ENCODE measurements at regions of chr4 and their contacts with region 1.

Region 1: DNA sequence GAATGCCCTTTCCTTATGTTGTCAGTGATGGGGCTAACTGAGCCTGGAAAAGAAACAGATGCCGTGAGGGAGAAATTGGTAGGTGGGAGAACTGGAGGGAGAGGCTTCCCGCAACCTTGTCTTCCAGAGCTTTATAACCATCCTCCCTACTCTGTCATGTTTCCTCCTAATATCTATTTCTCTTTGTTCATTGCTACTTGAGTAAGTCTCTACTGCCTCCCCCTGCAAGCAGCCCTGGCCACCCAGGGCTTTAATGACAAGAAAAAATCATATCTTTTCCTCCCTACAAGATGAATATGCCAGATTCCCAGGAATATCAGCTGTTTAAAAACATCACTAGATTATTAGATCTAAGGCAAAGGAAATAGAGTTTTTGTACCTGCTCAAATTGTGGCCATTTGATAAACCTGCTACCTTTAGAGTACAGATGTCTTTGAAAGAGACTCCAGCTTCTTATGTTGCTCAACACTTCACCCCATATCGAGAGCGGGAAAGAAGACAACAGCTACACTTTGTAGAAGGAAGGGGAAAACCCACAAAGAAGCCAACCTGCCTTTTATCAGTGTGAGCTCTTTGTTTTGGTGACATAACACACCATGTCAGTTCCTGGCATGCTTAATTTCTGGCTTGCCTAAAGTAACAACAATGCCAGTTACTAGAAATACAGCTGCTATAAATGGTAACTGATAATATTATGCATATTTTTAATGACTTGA is 186.6 kb upstream of the LEF1 start:
- DNase-seq: peak in 8 of 14 experiments; percentile 36 to 86 (median 55)
- ATAC-seq: peak; percentile 86
- H3K4me3 ChIP-seq: no peak overlapping the region
- H3K4me3 Mint-ChIP-seq: peak overlapping the region; percentile 47
- H3K27ac ChIP-seq: peak overlapping the region; percentile 69
- H3K27ac Mint-ChIP-seq: peak overlapping the region; percentile 87
- H3K4me1 ChIP-seq: peaks cover 40% of the 10 kb centered on the region
- H3K4me1 Mint-ChIP-seq: peaks cover 78% of the 10 kb centered on the region
- H3K27me3 ChIP-seq: no peaks in the 10 kb centered on the region
- H3K27me3 Mint-ChIP-seq: no peaks in the 10 kb centered on the region
- CTCF ChIP-seq: no peak

Region 2: DNA sequence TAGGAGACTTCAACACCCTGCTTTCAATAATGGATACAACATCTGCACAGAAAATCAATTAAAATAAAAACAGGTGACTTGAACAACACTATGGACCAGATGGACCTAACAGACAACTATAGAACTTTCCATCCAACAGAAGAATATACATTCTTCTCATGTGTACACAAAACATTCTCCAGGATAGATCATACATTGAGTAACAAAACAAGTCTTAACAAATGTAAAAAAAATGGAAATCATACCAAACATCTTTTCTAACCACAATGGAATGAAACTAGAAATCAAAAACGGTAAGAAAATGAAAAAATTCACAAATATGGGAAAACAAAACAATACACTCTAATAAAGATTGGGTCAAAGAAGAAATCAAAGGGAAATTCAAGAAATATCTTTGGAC is 399.3 kb before region 1 on chr4:
- CTCF ChIA-PET with region 1: no interaction called
- POLR2A ChIA-PET with region 1: no interaction called
- intact Hi-C with region 1: no loop called
- DNase-seq: no peak
- ATAC-seq: no peak
- H3K4me3 ChIP-seq: no peak overlapping the region
- H3K4me3 Mint-ChIP-seq: no peak overlapping the region
- H3K27ac ChIP-seq: no peak overlapping the region
- H3K27ac Mint-ChIP-seq: no peak overlapping the region
- H3K4me1 ChIP-seq: no peaks in the 10 kb centered on the region
- H3K4me1 Mint-ChIP-seq: no peaks in the 10 kb centered on the region
- H3K27me3 ChIP-seq: no peaks in the 10 kb centered on the region
- H3K27me3 Mint-ChIP-seq: no peaks in the 10 kb centered on the region
- CTCF ChIP-seq: no peak

Region 3: DNA sequence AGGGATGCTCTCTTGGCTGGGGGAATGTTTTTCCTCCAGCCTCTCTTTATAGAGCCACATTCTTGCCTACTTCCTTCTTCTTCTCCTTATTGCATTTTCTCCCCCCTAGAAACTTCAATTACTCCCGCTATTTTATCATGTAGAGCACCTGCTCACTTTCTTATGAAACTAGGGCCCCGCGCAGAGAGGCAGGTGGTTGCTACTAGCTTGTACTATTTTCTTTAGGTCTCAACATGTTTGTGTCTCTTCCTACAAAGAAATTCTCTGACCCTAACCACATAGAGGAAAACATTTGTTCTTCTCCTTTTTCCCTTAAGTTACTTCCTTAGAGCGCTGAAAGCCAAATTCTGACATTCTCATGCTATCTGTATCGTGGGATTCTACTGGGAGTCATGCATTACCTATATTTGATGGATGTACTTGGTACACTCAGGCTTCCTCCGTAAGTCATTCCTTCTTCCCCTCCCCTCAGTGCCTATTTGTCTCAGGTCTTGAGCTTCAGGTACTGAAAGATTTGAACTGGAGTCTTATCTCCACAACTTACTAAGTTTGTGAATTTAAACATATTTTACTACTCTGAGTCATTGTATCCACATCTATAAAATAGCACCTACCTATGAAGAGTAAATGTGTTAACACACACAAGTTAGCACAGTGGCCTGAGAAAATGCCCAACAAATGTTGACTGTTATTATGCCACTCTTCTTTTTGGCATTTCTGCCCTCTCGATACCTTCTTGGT is 27.5 kb before region 1 on chr4:
- CTCF ChIA-PET with region 1: no interaction called
- POLR2A ChIA-PET with region 1: interaction called, 4 read pairs
- intact Hi-C with region 1: loop called in 1 of 2 experiments (anchors 1 kb)
- DNase-seq: no peak
- ATAC-seq: no peak
- H3K4me3 ChIP-seq: no peak overlapping the region
- H3K4me3 Mint-ChIP-seq: no peak overlapping the region
- H3K27ac ChIP-seq: no peak overlapping the region
- H3K27ac Mint-ChIP-seq: no peak overlapping the region
- H3K4me1 ChIP-seq: peaks cover 4% of the 10 kb centered on the region
- H3K4me1 Mint-ChIP-seq: peaks cover 36% of the 10 kb centered on the region
- H3K27me3 ChIP-seq: no peaks in the 10 kb centered on the region
- H3K27me3 Mint-ChIP-seq: no peaks in the 10 kb centered on the region
- CTCF ChIP-seq: no peak

Region 4: GRCh38 chr4:108370291-108371141 is 15.2 kb after region 1 on chr4:
- CTCF ChIA-PET with region 1: interaction called, 3 read pairs
- POLR2A ChIA-PET with region 1: interaction called, 31 read pairs
- intact Hi-C with region 1: no loop called
- DNase-seq: peak in 6 of 14 experiments; percentile 9 to 60 (median 34)
- ATAC-seq: peak; percentile 69
- H3K4me3 ChIP-seq: peak overlapping the region; percentile 38
- H3K4me3 Mint-ChIP-seq: peak overlapping the region; percentile 87
- H3K27ac ChIP-seq: no peak overlapping the region
- H3K27ac Mint-ChIP-seq: peak overlapping the region; percentile 65
- H3K4me1 ChIP-seq: peaks cover 33% of the 10 kb centered on the region
- H3K4me1 Mint-ChIP-seq: peaks cover 51% of the 10 kb centered on the region
- H3K27me3 ChIP-seq: no peaks in the 10 kb centered on the region
- H3K27me3 Mint-ChIP-seq: no peaks in the 10 kb centered on the region
- CTCF ChIP-seq: no peak

Region 5: DNA sequence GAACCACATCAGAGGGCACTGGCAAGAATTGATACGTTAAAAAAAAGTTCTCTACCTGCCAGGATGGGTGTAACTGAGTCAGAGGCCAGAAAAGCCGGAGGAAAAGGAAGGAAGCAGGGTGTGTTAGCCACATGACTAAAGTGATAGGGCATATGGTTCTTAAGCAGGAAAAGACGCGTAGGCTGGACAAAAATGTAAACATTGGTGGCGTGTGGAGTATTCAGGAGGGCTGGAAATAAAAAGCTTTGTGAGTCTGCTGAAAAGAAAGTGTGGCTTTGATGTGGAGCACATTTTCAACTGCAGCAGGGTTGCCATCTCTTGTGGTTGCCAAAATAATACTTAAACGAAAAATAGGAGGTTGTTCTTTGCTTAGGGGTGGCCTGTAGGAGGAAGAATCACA is 78.5 kb after region 1 on chr4:
- CTCF ChIA-PET with region 1: no interaction called
- POLR2A ChIA-PET with region 1: no interaction called
- intact Hi-C with region 1: loop called in 1 of 2 experiments (anchors 5 kb)
- DNase-seq: peak in 12 of 14 experiments; percentile 4 to 85 (median 26)
- ATAC-seq: peak; percentile 79
- H3K4me3 ChIP-seq: peak overlapping the region; percentile 15
- H3K4me3 Mint-ChIP-seq: peak overlapping the region; percentile 34
- H3K27ac ChIP-seq: peak overlapping the region; percentile 42 to 69
- H3K27ac Mint-ChIP-seq: peak overlapping the region; percentile 74
- H3K4me1 ChIP-seq: peaks cover 24% of the 10 kb centered on the region
- H3K4me1 Mint-ChIP-seq: peaks cover 61% of the 10 kb centered on the region
- H3K27me3 ChIP-seq: no peaks in the 10 kb centered on the region
- H3K27me3 Mint-ChIP-seq: no peaks in the 10 kb centered on the region
- CTCF ChIP-seq: no peak

Region 6: DNA sequence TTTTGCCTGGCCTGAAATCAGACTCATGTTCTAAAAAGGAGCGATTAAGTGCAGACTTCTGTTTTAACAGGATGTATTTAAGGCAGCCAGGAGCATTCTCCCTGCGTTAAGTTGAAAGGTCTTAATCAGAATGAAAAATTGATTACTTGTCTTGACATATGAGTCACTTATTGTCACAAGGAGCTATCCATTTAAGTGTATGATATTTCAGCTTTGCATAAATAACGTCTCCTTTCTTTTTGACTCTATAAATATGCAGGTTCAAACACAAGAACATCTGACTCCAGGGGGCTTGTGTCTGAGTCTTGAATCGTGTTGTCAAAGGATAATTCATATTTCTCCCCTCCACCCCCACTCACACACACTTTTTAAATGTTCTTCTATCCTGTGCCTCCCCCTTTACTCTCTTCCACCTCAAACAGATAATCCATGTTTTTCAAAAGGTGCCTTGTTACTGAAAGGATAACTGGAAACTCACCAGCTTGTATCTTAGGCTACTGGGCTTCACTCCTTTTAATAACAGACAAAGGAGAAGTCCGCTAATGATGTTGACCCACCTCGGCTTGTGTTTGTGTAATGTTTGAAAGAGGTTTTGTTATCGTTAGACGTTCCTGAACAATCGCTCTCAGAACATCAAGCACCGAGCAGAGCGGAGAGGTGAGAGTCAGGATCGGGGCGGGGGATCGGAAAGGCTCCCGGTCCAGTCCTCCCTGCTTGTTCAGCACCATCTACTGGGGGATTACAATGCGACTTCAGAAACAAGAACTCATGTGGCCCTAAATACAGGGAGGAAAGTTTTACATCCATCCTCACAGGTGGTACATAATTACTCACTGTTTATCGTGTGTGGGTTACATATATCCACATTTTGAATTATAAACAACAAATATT is 157.5 kb after region 1 on chr4:
- CTCF ChIA-PET with region 1: no interaction called
- POLR2A ChIA-PET with region 1: no interaction called
- intact Hi-C with region 1: loop called in 1 of 2 experiments (anchors 5 kb)
- DNase-seq: peak; percentile 11 to 76 (median 42)
- ATAC-seq: peak; percentile 95
- H3K4me3 ChIP-seq: no peak overlapping the region
- H3K4me3 Mint-ChIP-seq: peak overlapping the region; percentile 78
- H3K27ac ChIP-seq: no peak overlapping the region
- H3K27ac Mint-ChIP-seq: no peak overlapping the region
- H3K4me1 ChIP-seq: peaks cover 3% of the 10 kb centered on the region
- H3K4me1 Mint-ChIP-seq: peaks cover 21% of the 10 kb centered on the region
- H3K27me3 ChIP-seq: no peaks in the 10 kb centered on the region
- H3K27me3 Mint-ChIP-seq: no peaks in the 10 kb centered on the region
- CTCF ChIP-seq: peak; percentile 29

Region 7: GRCh38 chr4:108650212-108651013 is 295.1 kb after region 1 on chr4 and contains the start of gene OSTC:
- CTCF ChIA-PET with region 1: no interaction called
- POLR2A ChIA-PET with region 1: no interaction called
- intact Hi-C with region 1: no loop called
- DNase-seq: peak; percentile 86 to 96 (median 89)
- ATAC-seq: peak; percentile 89
- H3K4me3 ChIP-seq: peak within 1 kb of the TSS; percentile 85
- H3K4me3 Mint-ChIP-seq: peak within 1 kb of the TSS; percentile 93
- H3K27ac ChIP-seq: peak within 1 kb of the TSS; percentile 84
- H3K27ac Mint-ChIP-seq: peak within 1 kb of the TSS; percentile 99
- H3K4me1 ChIP-seq: peaks cover 15% of the 10 kb centered on the region
- H3K4me1 Mint-ChIP-seq: peaks cover 50% of the 10 kb centered on the region
- H3K27me3 ChIP-seq: no peaks in the 10 kb centered on the region
- H3K27me3 Mint-ChIP-seq: no peaks in the 10 kb centered on the region
- CTCF ChIP-seq: peak; percentile 21
- total RNA-seq, gene OSTC: 21.8 to 25.5 TPM

Measured in CD4-positive, alpha-beta T cell (primary cell).